ENCODE measurements at regions of chr7 and their contacts with region 1.

Region 1: GRCh38 chr7:116180302-116180701 is 30.0 kb upstream of the TES start:
- DNase-seq: peak; percentile 29
- H3K4me3 Mint-ChIP-seq: no peak overlapping the region
- H3K27ac Mint-ChIP-seq: no peak overlapping the region
- H3K4me1 Mint-ChIP-seq: peaks cover 10% of the 10 kb centered on the region
- H3K27me3 Mint-ChIP-seq: peaks cover 2% of the 10 kb centered on the region

Region 2: GRCh38 chr7:116200963-116201362 is 20.7 kb after region 1 on chr7:
- CTCF ChIA-PET with region 1: interaction called, 14 read pairs
- DNase-seq: no peak
- H3K4me3 Mint-ChIP-seq: no peak overlapping the region
- H3K27ac Mint-ChIP-seq: no peak overlapping the region
- H3K4me1 Mint-ChIP-seq: no peaks in the 10 kb centered on the region
- H3K27me3 Mint-ChIP-seq: peaks cover 15% of the 10 kb centered on the region

Region 3: DNA sequence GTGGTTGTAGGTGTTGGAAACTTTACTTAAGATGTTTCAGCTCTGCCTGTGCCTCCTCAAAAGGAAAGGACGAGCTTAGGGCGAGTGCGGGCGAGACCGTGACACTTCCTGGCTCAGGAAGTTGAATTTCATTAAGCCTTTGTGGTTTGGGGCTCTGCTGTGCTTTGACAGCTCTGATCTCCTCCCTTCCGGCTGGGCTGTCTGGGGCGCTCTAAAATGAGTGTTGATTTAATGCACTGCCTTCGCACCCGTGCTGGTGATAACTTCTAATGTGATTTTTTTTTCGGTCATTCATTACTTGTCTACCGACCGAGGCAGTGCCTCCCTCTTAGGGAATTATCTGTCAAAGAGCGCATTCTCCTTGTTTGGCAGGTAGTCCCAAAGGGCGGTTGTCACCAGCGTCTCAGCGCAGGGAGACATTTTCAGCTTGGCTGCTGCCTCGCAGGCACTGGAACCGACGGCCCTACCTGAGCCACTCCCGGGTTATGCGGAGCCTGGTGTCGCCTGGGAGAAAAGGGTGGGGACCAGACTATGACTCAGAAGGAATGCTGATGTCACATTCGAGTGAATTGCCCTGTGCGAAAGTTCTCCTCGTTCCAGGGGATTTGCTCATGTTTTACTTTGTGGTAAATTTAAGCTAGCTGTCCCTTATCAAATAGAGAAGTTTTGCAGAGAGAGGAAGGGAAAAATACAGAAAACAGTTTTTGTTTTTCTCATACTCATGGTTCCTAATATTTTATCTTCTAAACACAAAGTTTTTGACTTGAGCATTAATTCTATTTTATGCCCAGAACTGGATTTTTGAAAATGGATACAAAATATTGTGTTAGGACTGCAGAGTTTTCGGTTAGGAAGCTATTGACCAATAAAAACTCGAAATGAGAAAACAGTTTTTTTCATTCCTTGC is 31.0 kb after region 1 on chr7:
- CTCF ChIA-PET with region 1: interaction called, 10 read pairs
- DNase-seq: peak; percentile 86
- H3K4me3 Mint-ChIP-seq: peak overlapping the region; percentile 96
- H3K27ac Mint-ChIP-seq: peak overlapping the region; percentile 96
- H3K4me1 Mint-ChIP-seq: peaks cover 60% of the 10 kb centered on the region
- H3K27me3 Mint-ChIP-seq: no peaks in the 10 kb centered on the region